MCF 10A (cell line): ENCODE measurements at regions of chr4 and their contacts with region 1.

Region 1: DNA sequence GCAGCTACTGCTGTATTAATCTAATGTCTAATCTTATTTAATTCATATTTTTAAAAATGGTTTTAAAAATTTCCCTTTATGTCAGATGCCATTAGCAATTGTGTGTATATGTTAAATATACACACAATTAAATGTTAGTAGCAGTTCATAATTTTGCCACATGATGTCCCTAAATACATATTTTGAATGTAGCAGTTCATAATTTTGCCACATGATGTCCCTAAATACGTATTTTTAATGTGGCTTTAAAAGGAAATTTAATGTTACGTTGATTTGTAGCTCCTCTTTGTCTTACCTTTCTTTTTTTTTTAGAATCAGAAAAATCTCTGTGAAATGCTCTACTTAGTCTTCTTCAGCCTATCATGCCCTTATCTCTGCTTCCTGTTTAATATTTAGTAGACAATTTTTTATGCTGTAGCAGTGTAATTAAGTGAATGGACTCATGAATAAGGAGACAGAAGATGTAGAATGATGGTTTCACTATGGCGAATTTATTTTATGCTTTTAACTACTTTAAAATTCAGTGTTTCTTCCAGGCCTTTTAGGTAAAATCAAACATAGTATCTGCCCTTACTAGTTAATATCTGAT is 26.1 kb downstream of the RBM46 start:
- DNase-seq: peak; percentile 48
- H3K4me3 Mint-ChIP-seq: peak overlapping the region; percentile 46
- H3K27ac Mint-ChIP-seq: no peak overlapping the region
- H3K4me1 Mint-ChIP-seq: peaks cover 5% of the 10 kb centered on the region
- H3K27me3 Mint-ChIP-seq: no peaks in the 10 kb centered on the region
- CTCF ChIP-seq: peak; percentile 84

Region 2: DNA sequence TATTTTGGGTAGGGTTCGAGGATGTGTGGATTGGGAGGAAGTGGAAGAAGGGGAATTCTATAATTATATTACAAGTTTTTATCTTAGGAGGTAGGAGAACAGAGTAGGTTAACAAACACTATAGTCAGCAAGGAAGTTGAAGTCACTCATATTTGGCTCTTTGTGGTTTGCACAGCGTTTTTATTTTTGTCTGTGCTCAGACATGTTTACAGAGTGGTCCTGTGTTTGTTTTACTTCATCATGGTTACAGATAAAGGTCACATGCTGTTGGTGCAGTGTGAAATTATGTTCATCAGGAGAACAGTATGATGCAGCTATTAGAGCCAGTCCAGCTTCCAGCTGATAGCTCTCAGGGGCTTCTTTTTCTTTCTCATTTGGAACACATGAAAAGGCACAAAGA is 718.4 kb before region 1 on chr4:
- CTCF ChIA-PET with region 1: no interaction called
- POLR2A ChIA-PET with region 1: no interaction called
- intact Hi-C with region 1: no loop called
- DNase-seq: no peak
- H3K4me3 Mint-ChIP-seq: no peak overlapping the region
- H3K27ac Mint-ChIP-seq: no peak overlapping the region
- H3K4me1 Mint-ChIP-seq: peaks cover 4% of the 10 kb centered on the region
- H3K27me3 Mint-ChIP-seq: no peaks in the 10 kb centered on the region
- CTCF ChIP-seq: no peak

Region 3: GRCh38 chr4:154771123-154771522 is 36.0 kb before region 1 on chr4:
- CTCF ChIA-PET with region 1: no interaction called
- POLR2A ChIA-PET with region 1: no interaction called
- intact Hi-C with region 1: no loop called
- DNase-seq: no peak
- H3K4me3 Mint-ChIP-seq: no peak overlapping the region
- H3K27ac Mint-ChIP-seq: no peak overlapping the region
- H3K4me1 Mint-ChIP-seq: no peaks in the 10 kb centered on the region
- H3K27me3 Mint-ChIP-seq: no peaks in the 10 kb centered on the region
- CTCF ChIP-seq: no peak

Region 4: DNA sequence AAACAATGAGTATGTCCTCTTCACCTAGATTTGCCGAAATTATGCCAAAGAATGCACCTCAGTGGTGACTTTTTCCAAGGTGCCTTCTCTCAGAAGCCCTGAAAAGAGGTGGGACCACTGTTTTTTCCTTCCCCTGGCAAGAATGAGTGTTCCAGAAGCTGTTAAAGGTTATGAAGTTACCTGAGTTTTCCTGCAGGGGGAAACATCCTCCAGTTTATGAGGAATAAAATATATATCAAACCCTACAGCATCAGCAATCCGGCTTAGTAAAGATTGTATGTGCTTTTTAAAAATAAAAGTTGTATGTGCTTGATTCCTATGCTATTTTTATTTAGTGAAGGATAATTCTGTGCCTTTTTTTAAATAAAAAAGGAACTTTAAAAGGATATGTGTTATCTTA is 47.2 kb after region 1 on chr4:
- CTCF ChIA-PET with region 1: interaction called, 6 read pairs
- POLR2A ChIA-PET with region 1: interaction called, 3 read pairs
- intact Hi-C with region 1: loop called (anchors 1 kb)
- DNase-seq: peak; percentile 57
- H3K4me3 Mint-ChIP-seq: no peak overlapping the region
- H3K27ac Mint-ChIP-seq: no peak overlapping the region
- H3K4me1 Mint-ChIP-seq: peaks cover 6% of the 10 kb centered on the region
- H3K27me3 Mint-ChIP-seq: no peaks in the 10 kb centered on the region
- CTCF ChIP-seq: peak; percentile 67

Region 5: GRCh38 chr4:154928640-154929257 is 121.6 kb after region 1 on chr4:
- CTCF ChIA-PET with region 1: interaction called, 43 read pairs
- POLR2A ChIA-PET with region 1: no interaction called
- intact Hi-C with region 1: loop called (anchors 1 kb)
- DNase-seq: peak; percentile 54
- H3K4me3 Mint-ChIP-seq: no peak overlapping the region
- H3K27ac Mint-ChIP-seq: no peak overlapping the region
- H3K4me1 Mint-ChIP-seq: peaks cover 5% of the 10 kb centered on the region
- H3K27me3 Mint-ChIP-seq: no peaks in the 10 kb centered on the region
- CTCF ChIP-seq: peak; percentile 46

Region 6: GRCh38 chr4:154982187-154983047 is 175.3 kb after region 1 on chr4:
- CTCF ChIA-PET with region 1: interaction called, 17 read pairs
- POLR2A ChIA-PET with region 1: no interaction called
- intact Hi-C with region 1: loop called (anchors 5 kb)
- DNase-seq: peak; percentile 82
- H3K4me3 Mint-ChIP-seq: no peak overlapping the region
- H3K27ac Mint-ChIP-seq: peak overlapping the region; percentile 20
- H3K4me1 Mint-ChIP-seq: peaks cover 6% of the 10 kb centered on the region
- H3K27me3 Mint-ChIP-seq: no peaks in the 10 kb centered on the region
- CTCF ChIP-seq: peak; percentile 69

Region 7: DNA sequence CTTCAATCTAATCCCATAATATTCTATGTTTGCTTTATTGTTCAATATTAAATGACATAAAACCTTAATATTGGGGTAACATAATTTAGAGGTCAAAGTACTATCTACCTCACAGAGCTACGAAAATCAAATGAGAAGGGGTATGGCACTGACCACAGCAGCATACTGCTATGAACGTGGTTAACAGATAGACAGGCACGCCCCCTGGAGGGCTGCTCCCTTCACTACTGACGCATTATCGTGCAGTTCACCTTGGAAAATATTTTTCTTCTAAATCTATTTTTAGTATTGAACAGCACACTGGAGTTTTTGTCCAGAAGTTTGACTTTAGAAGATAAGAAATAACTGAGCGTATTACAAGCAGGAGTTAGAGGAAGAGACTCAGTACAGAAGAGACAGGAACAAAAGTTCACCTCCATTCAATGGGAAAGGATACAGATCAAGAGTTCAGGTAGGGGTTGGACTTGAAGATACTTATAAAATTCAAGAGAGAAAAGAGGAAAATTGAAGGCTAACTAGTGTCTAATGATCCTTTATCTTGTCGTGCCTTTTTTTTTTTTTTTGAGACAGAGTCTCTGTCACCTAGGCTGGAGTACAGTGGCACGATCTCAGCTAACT is 546.9 kb after region 1 on chr4:
- CTCF ChIA-PET with region 1: interaction called, 9 read pairs
- POLR2A ChIA-PET with region 1: no interaction called
- intact Hi-C with region 1: loop called (anchors 5 kb)
- DNase-seq: peak; percentile 66
- H3K4me3 Mint-ChIP-seq: no peak overlapping the region
- H3K27ac Mint-ChIP-seq: peak overlapping the region; percentile 47
- H3K4me1 Mint-ChIP-seq: peaks cover 5% of the 10 kb centered on the region
- H3K27me3 Mint-ChIP-seq: no peaks in the 10 kb centered on the region
- CTCF ChIP-seq: peak; percentile 89

Region 8: GRCh38 chr4:155371432-155372043 is 564.4 kb after region 1 on chr4:
- CTCF ChIA-PET with region 1: interaction called, 13 read pairs
- POLR2A ChIA-PET with region 1: no interaction called
- intact Hi-C with region 1: loop called (anchors 2 kb)
- DNase-seq: peak; percentile 40
- H3K4me3 Mint-ChIP-seq: no peak overlapping the region
- H3K27ac Mint-ChIP-seq: no peak overlapping the region
- H3K4me1 Mint-ChIP-seq: peaks cover 6% of the 10 kb centered on the region
- H3K27me3 Mint-ChIP-seq: no peaks in the 10 kb centered on the region
- CTCF ChIP-seq: peak; percentile 49

Region 9: DNA sequence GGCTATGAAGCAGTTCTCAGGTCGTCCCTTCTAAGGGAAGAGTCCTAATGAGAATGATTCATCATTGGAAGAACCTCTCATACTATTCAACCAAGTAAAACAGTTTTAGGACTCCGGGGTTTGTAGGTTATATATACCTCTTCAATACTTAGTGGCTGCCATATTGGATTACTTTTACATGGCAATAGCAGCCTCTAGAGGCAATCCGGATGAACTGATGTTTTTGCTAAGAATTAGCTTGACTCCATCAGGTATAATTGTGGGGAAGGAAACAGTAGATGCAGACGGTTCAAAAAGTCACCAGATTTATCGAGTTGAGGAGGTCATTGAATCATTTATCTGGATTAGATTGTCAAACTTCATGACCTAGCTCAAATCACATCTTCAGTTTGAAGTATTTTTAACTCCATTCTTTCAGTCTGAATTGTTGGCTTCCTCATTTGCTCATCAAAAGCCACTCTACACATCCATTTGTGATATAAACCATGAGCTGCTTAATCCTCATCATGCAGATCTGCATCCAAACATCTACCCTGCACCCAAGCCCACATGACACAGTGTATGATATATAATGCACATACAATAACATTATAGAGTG is 980.1 kb after region 1 on chr4:
- CTCF ChIA-PET with region 1: interaction called, 3 read pairs
- POLR2A ChIA-PET with region 1: no interaction called
- intact Hi-C with region 1: loop called (anchors 1 kb)
- DNase-seq: peak; percentile 73
- H3K4me3 Mint-ChIP-seq: no peak overlapping the region
- H3K27ac Mint-ChIP-seq: no peak overlapping the region
- H3K4me1 Mint-ChIP-seq: peaks cover 5% of the 10 kb centered on the region
- H3K27me3 Mint-ChIP-seq: no peaks in the 10 kb centered on the region
- CTCF ChIP-seq: peak; percentile 74